ENCODE measurements at regions of chr12 and their contacts with region 1.

Region 1: DNA sequence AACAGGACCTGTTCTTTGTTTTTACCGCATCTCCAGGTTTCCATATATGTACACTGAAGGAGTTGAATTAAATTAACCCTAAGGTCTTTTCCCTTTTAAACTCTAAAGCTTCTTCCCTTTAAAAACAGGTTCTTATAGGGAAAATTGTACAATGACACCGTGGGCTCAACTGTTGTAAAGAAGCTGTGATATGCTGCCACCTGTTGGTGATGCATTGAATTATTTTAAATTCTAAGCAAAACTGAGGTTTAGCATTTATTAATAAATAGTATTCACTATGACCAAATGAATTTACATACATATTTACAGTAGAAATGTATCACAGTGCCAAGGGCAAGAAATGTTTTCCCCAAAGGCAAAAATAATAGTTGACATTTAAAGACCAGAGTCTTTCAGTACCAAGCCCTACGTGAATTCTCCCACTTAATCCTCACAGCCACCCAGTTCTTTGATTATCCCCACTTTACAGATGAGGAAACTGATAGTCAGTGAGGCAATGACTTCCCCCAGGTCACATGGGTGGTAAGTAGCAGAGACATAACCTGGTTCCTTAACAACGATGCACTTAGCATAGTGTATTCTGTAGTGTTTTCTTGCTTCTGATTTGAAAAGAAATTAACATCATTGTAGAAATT is 35.7 kb upstream of the TMEM263 start:
- DNase-seq: peak; percentile 23
- H3K4me3 Mint-ChIP-seq: no peak overlapping the region
- H3K27ac Mint-ChIP-seq: no peak overlapping the region
- H3K4me1 Mint-ChIP-seq: peaks cover 8% of the 10 kb centered on the region
- H3K27me3 Mint-ChIP-seq: peaks cover 5% of the 10 kb centered on the region

Region 2: DNA sequence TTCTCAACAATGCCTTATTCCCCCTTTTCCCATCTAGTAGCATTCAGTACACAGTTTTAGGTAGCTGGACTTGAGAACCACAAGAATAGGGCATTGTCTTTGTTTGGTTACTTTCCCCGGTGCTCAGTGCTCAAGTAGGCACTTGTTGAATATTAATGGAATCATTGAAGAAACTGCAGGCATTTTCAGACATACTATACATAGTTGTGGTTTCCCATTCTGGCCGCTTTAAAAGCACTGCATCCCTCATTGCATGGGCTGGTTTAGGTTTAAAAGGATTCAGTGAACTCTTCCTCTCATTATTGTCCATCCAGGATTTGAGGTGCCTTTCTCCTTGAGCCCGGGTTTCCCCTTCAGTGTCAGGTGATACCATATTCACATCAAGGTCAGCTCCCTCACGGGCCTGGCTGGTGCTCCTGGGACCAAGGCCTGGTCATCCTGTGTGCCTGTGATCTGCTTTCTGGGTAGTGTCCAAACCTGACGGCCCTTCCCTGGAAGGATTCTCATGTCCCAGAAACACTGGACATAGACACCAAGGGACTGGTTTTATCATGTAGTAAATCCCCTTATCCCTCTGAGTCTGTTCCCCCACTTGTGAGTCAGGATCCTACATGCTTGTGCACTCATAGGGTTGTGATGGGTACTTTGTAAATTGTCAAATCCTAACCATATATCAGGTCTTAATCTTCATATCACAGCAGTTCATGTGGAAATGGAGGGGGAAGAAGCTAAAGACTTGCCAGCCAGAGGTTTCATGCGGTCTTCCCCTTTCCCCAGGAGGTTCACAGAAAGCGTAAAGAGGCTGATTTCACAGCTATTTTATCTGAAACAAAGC is 610.1 kb before region 1 on chr12:
- CTCF ChIA-PET with region 1: no interaction called
- intact Hi-C with region 1: no loop called
- DNase-seq: no peak
- H3K4me3 Mint-ChIP-seq: no peak overlapping the region
- H3K27ac Mint-ChIP-seq: peak overlapping the region; percentile 19
- H3K4me1 Mint-ChIP-seq: peaks cover 59% of the 10 kb centered on the region
- H3K27me3 Mint-ChIP-seq: no peaks in the 10 kb centered on the region

Region 3: GRCh38 chr12:106386813-106387535 is 533.1 kb before region 1 on chr12:
- CTCF ChIA-PET with region 1: interaction called, 10 read pairs
- intact Hi-C with region 1: loop called (anchors 1 kb)
- DNase-seq: no peak
- H3K4me3 Mint-ChIP-seq: no peak overlapping the region
- H3K27ac Mint-ChIP-seq: no peak overlapping the region
- H3K4me1 Mint-ChIP-seq: no peaks in the 10 kb centered on the region
- H3K27me3 Mint-ChIP-seq: no peaks in the 10 kb centered on the region

Region 4: DNA sequence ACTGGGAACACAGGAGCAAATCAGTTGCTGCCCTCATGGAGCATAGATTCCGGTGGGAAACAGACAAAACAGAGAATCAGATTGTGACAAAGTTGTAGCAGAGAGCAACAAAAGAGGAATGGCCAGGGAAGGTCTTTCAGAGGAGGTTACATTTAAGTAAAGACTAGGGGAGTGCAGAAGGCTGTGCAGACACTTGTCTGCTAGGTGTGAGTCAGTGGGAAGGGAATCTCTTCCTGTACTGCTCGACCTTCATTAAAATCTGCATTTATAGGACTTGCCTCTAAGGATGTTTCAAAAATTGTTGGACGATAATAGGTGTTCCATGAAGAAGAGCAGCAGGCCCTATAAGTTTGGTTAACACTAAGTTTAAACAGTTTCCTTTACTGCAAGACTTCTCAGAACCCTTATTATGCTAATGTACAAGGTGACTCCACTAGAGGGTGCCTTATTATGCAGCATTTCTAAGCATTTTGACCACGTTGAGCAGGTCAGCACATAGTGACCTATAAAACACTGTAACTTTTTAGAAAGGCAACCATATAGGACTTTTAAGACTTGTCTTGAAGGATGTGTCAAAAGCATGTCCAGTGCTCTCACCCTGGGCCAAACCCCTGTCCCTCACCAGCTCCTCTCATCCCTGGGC is 237.3 kb before region 1 on chr12:
- CTCF ChIA-PET with region 1: no interaction called
- intact Hi-C with region 1: loop called (anchors 1 kb)
- DNase-seq: no peak
- H3K4me3 Mint-ChIP-seq: no peak overlapping the region
- H3K27ac Mint-ChIP-seq: no peak overlapping the region
- H3K4me1 Mint-ChIP-seq: no peaks in the 10 kb centered on the region
- H3K27me3 Mint-ChIP-seq: no peaks in the 10 kb centered on the region

Region 5: DNA sequence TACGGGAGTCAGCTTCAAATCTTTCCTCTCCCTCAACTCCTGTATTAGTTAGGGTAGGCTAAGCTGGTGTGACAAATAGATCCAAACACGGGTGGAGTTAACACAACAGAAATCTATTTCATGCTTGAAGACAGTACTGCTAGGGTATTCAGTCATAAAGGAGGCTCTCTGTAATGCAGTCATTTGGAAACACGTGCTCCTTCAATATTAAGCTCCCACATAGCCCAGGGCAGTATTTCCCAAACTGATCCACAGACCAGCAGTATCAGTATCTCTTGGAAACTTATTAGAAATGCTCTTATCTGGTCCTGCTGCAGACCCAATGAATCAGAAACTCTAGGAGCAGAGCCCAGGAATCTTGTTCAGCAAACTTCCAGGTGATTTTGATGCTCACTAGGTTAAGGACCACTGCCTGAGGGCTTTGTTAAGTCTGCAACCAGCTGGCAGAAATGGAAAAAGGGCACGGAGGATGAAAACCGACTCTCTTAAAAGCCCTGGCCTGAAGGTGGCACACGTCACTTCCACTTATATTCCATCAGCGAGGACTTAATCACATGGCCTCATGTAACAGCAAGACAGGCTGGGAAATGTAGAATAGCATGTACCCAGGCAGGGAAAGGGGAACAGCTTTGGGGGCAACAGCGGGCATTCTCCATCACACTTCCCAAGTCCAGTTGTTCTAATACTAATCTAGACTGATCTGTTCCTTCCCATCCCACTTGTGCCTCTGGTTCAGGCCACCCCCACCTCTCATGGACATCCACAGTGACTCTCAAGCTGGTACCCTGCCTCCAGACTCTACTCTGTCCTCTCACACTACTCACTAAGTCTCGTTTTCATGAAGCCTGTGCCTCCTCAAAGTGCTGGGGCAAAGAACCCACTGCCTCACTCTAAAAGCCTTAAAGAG is 183.7 kb before region 1 on chr12:
- CTCF ChIA-PET with region 1: interaction called, 4 read pairs
- intact Hi-C with region 1: loop called (anchors 1 kb)
- DNase-seq: peak; percentile 49
- H3K4me3 Mint-ChIP-seq: no peak overlapping the region
- H3K27ac Mint-ChIP-seq: no peak overlapping the region
- H3K4me1 Mint-ChIP-seq: peaks cover 4% of the 10 kb centered on the region
- H3K27me3 Mint-ChIP-seq: no peaks in the 10 kb centered on the region

Region 6: GRCh38 chr12:106790020-106790419 is 130.0 kb before region 1 on chr12:
- CTCF ChIA-PET with region 1: no interaction called
- intact Hi-C with region 1: no loop called
- DNase-seq: no peak
- H3K4me3 Mint-ChIP-seq: no peak overlapping the region
- H3K27ac Mint-ChIP-seq: no peak overlapping the region
- H3K4me1 Mint-ChIP-seq: peaks cover 3% of the 10 kb centered on the region
- H3K27me3 Mint-ChIP-seq: no peaks in the 10 kb centered on the region

Region 7: DNA sequence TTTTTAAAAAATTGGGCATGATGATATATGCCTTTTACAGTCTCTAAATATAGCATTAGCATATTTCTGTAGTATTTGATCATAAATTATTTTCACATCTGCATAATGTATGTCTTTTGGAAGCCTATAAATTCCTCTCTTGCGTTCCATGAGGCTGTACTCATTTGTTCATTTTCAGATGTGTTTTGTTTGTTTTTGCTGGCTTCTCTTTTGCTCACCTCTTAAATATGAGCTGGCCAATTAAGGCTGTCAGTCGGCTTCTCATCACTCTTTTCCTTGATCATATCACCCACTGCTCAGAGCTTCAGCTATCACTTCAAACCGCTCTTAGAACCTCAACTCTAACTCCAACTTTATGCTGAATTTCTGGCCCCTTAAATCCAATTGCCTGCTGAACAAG is 42.3 kb after region 1 on chr12:
- CTCF ChIA-PET with region 1: no interaction called
- intact Hi-C with region 1: no loop called
- DNase-seq: no peak
- H3K4me3 Mint-ChIP-seq: no peak overlapping the region
- H3K27ac Mint-ChIP-seq: no peak overlapping the region
- H3K4me1 Mint-ChIP-seq: peaks cover 29% of the 10 kb centered on the region
- H3K27me3 Mint-ChIP-seq: no peaks in the 10 kb centered on the region

Region 8: GRCh38 chr12:107105410-107105703 is 185.3 kb after region 1 on chr12:
- CTCF ChIA-PET with region 1: no interaction called
- intact Hi-C with region 1: loop called (anchors 5 kb)
- DNase-seq: no peak
- H3K4me3 Mint-ChIP-seq: no peak overlapping the region
- H3K27ac Mint-ChIP-seq: no peak overlapping the region
- H3K4me1 Mint-ChIP-seq: no peaks in the 10 kb centered on the region
- H3K27me3 Mint-ChIP-seq: peaks cover 3% of the 10 kb centered on the region

Region 9: DNA sequence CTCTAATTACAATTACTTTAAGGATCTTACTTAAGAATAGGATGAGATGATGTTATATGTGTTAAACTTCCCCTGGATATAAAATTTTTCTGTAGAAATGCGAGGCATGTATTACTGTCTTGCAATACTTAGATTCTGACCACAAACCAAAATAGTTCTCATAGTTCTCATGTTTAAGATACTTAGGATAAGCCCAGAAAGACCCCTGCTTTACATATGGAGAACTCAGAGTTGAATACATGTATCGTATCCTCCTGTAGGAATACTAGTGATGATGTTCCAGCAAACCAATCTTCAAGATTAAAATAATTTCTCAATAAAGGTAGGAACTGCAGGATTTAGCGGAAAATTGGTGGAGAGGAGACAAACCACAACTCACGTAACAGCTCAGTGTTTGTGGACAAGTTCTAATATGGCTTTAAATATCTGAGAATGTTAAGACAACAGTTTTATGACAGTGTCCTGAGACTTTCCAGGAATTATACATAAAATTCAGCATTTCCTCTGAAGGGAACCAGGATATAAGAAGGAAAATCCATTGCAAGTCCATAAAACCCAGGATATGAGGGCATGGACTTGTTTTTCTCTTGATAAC is 288.0 kb after region 1 on chr12:
- CTCF ChIA-PET with region 1: no interaction called
- intact Hi-C with region 1: no loop called
- DNase-seq: no peak
- H3K4me3 Mint-ChIP-seq: no peak overlapping the region
- H3K27ac Mint-ChIP-seq: no peak overlapping the region
- H3K4me1 Mint-ChIP-seq: no peaks in the 10 kb centered on the region
- H3K27me3 Mint-ChIP-seq: peaks cover 3% of the 10 kb centered on the region

Measured in activated naive CD4-positive, alpha-beta T cell treated with anti-CD3 and anti-CD28 coated beads for 36 hours (primary cell).